ENCODE measurements at regions of chr1 and their contacts with region 1.

Region 1: DNA sequence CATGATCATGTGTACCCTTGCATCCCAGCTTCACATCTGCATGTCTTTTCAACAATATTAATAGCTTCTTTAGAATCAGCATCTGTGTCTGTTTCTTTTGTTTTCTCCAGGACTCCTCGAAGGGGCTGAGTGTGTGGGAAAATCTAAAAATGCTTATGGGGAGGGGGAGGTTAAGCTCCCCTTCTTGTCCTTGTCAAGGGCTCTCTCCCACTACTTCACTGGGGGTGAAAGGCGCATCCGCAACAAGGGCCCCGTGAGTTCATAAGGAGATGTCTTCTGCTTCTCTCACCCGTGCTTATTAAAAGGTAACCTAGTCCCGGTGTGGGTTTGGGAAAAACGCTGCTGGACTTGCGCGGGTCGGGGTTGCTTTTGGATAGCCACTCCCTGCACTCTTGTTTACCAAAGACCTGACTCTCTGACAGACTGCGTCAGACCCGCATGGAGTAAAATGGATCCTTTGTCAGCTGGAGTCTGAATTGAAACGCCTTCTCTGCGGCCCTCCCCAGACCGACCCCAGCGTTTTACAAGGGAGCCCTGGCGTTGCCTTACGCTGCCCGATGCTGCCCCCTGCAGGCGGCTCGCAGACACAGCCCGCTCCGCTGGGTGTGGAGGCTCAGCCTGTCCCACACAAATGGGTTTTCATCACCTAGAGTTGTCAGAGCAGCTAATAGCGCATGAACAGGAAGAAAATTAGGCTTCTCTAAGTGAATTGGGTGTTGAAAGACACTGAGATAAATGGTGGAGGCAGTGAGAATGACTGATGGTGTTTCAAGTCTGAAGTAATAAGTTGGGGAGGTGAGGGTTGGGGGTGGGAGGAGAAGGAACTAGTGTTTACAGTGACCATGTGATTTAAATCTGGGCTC is 53.8 kb downstream of the IER5 start:
- DNase-seq: peak; percentile 84 to 90 (median 88)
- H3K4me3 ChIP-seq: peak overlapping the region in 1 of 7 experiments; percentile 58
- H3K27ac ChIP-seq: no peak overlapping the region
- H3K4me1 ChIP-seq: peaks cover 0 to 41% (median 19%) of the 10 kb centered on the region in 4 experiments
- H3K27me3 ChIP-seq: peaks cover 0 to 3% (median 0%) of the 10 kb centered on the region in 5 experiments

Region 2: GRCh38 chr1:180881806-180882509 is 260.4 kb before region 1 on chr1:
- CTCF ChIA-PET with region 1: interaction called, 38 read pairs
- POLR2A ChIA-PET with region 1: no interaction called
- DNase-seq: peak; percentile 43 to 64 (median 62)
- H3K4me3 ChIP-seq: no peak overlapping the region
- H3K27ac ChIP-seq: no peak overlapping the region
- H3K4me1 ChIP-seq: no peaks in the 10 kb centered on the region
- H3K27me3 ChIP-seq: no peaks in the 10 kb centered on the region

Region 3: GRCh38 chr1:181033799-181034451 is 108.4 kb before region 1 on chr1 and contains the start of gene MR1:
- CTCF ChIA-PET with region 1: interaction called, 81 read pairs
- POLR2A ChIA-PET with region 1: no interaction called
- DNase-seq: peak; percentile 91 to 95 (median 94)
- H3K4me3 ChIP-seq: peak within 1 kb of the TSS in 6 of 7 experiments; percentile 69 to 90 (median 79)
- H3K27ac ChIP-seq: peak within 1 kb of the TSS; percentile 84 to 91
- H3K4me1 ChIP-seq: peaks cover 3 to 28% (median 19%) of the 10 kb centered on the region in 4 experiments
- H3K27me3 ChIP-seq: no peaks in the 10 kb centered on the region

Region 4: DNA sequence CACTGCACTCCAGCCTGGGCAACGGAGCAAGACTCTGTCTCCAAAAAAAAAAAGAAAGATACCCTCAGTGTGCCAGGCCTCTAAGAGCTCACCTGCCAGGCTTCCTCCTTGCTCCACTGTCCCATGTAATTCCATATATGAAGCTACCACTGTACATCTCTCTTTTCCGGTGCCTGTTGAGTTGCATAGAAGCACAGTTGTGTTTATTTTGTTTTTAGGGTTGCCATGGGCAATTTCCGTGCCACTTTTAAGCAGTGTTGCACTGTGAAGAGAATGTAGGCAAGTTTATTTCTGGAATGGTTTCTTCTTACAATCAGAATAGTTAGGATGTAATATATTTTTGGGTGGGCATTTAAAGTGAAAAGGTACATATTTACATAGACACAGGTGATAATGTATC is 85.2 kb before region 1 on chr1:
- CTCF ChIA-PET with region 1: interaction called, 17 read pairs
- POLR2A ChIA-PET with region 1: no interaction called
- DNase-seq: no peak
- H3K4me3 ChIP-seq: no peak overlapping the region
- H3K27ac ChIP-seq: no peak overlapping the region
- H3K4me1 ChIP-seq: peaks cover 0 to 6% (median 2%) of the 10 kb centered on the region in 4 experiments
- H3K27me3 ChIP-seq: no peaks in the 10 kb centered on the region

Region 5: DNA sequence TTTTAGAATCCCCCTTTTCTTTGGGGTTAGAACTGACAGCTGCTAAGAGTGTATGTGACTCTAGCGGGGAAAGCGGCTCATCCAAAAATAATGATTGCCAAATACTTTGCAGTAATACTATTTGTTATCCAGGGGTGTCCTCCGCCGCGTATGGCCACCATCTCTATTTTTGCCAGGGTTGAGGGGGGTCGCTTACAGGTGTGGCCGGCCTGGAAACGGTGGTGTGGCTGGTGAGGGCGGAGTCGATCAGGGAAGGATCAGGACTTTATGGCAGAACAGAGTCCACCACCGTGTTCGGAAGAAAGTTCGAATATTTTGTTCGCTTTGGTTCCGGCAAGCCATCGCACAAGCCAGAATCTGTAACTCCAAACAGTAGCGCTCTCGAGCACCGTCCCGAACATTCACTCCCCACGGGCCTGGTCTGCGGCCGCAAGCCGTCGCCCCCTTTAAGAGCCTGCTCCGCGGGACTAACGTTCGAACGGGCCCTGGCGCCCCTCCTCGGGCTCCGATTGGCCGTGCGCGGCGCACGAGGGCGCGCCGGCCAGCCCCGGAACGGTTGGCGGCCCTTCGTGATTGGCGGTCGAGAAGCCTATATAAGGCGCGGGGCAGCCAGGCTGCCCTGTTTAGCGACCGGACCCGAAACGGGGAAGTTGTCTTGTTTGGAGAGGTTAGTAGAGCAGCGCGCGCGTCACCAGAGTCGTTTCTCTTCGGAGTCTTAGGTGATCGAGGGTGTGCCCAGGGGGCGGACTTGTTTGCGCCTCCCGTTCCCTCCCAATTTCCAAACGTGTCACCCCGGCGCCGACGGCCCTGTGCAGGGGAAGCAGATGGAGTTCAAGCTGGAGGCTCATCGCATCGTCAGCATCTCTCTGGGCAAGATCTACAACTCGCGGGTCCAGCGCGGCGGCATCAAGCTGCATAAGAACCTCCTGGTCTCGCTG is 54.0 kb before region 1 on chr1 and contains the start of gene IER5:
- CTCF ChIA-PET with region 1: interaction called, 125 read pairs
- POLR2A ChIA-PET with region 1: interaction called, 25 read pairs
- DNase-seq: peak; percentile 95 to 98 (median 98)
- H3K4me3 ChIP-seq: peak within 1 kb of the TSS; percentile 63 to 95 (median 86)
- H3K27ac ChIP-seq: peak within 1 kb of the TSS; percentile 67 to 86
- H3K4me1 ChIP-seq: peaks cover 25 to 52% (median 31%) of the 10 kb centered on the region in 4 experiments
- H3K27me3 ChIP-seq: no peaks in the 10 kb centered on the region

Region 6: DNA sequence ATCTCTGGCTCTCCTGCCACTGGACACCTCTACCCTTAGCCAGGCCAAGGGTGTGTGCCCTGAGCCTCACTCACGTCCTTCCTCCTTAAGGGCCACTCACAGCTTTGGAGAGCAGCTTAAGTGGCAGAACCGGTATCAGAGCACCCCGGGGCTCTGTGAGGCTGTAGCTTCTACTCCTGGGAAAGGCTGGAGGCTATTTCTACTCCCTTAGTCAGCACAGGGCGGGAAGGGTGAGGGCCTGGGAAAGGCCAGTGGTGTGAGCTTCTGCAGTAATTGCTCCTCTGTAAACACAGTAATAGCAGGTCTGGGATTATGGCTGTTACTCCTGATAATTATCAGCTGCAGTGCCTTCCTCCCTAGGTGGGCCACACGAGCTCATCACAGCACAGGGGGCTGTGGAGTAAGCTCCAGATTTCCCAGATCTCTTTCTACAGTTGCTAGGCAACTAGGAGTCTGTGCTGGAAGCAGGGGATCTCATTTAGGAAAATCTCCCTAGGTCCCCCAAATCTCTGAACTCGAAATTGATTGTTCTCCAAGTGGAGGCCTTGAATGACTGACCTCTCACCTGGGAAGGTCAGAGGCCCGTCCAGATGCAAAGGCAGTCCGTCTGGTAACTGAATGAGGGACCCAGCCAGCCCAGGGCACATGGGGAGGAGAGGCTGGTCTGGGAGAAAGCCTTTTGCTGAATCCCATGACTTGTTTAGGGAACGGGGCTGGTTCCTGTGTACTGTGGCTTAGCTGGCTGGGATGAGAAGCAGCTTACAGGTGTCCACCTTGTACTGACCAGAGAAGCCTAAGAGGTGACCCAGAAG is 24.5 kb before region 1 on chr1:
- CTCF ChIA-PET with region 1: interaction called, 10 read pairs
- POLR2A ChIA-PET with region 1: no interaction called
- DNase-seq: no peak
- H3K4me3 ChIP-seq: no peak overlapping the region
- H3K27ac ChIP-seq: no peak overlapping the region
- H3K4me1 ChIP-seq: peaks cover 0 to 9% (median 0%) of the 10 kb centered on the region in 4 experiments
- H3K27me3 ChIP-seq: no peaks in the 10 kb centered on the region

Region 7: GRCh38 chr1:181152892-181153633 is 10.7 kb after region 1 on chr1:
- CTCF ChIA-PET with region 1: interaction called, 74 read pairs
- POLR2A ChIA-PET with region 1: no interaction called
- DNase-seq: peak; percentile 95 to 99 (median 98)
- H3K4me3 ChIP-seq: peak overlapping the region in 3 of 7 experiments; percentile 7 to 46 (median 41)
- H3K27ac ChIP-seq: peak overlapping the region in 1 of 2 experiments; percentile 67
- H3K4me1 ChIP-seq: peaks cover 33 to 58% (median 51%) of the 10 kb centered on the region in 4 experiments
- H3K27me3 ChIP-seq: peaks cover 0 to 4% (median 0%) of the 10 kb centered on the region in 5 experiments

Measured in common myeloid progenitor, CD34-positive (primary cell).